GM18951 (cell line): ENCODE measurements at regions of chr4 and their contacts with region 1.

Region 1: DNA sequence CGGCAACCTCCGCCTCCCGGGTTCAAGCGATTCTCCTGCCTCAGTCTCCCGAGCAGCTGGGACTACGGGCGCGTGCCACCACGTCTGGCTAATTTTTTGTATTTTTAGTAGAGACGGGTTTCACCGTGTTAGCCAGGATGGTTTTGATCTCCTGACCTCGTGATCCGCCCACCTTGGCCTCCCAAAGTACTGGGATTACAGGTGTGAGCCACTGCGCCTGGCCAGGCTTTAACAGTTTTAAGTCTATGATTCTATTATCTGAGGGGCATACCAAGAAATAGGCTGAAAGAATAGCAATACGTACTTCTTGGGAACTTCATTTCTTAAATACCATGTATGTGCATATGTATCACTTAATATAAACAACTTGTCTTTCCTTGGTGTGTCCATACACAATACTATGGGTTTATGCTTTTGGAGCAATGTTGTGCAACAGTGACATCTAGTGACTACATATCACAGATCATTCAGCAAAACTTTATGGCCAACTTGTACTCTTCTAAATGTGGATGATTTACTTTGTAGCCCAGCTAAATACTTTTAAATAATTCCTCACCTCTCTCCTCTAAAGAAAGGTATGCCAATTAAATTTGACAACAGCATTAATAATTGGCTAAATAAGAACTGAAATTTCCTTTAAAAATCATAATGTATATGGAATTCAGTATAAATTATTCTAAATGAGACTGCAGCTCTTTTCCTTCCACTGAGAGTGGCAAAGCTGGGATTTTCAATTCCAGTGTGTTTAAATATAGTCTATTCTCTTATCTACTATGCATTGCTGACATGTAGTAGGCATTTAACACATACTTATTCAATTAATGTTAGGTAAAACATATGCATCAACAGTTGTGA is 10.4 kb downstream of the SLC9B1 start:
- POLR2A ChIP-seq: no peak

Region 2: DNA sequence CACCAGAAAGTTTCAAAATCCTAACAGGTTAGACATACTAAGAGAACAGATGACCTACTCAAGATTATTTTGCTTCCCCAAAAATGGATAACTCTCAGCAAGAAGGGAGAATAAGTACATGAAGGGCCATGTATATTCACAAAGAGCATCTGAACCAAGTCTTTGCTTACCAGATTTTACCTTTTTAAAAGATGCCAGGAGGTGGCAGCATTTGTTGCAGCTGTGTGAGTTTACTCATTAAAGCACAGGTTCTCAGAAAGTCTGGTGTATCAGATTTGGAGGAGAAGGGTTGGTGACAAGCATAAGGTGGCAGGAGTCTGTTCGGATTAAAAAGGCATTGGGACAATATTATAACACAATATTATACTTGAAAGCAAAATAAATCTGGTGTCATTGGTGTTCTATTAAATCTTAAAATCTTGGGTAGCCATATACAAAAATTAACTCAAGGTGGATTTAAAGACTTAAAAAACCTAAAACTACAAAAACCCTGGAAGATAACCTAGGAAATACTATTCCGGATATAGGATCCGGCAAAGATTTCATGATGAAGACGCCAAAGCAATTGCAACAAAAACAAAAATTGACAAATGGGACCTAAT is 559.2 kb before region 1 on chr4:
- in situ Hi-C with region 1: loop called (anchors 10 kb)
- POLR2A ChIP-seq: no peak